ENCODE measurements at regions of chr22 and their contacts with region 1.

Region 1: DNA sequence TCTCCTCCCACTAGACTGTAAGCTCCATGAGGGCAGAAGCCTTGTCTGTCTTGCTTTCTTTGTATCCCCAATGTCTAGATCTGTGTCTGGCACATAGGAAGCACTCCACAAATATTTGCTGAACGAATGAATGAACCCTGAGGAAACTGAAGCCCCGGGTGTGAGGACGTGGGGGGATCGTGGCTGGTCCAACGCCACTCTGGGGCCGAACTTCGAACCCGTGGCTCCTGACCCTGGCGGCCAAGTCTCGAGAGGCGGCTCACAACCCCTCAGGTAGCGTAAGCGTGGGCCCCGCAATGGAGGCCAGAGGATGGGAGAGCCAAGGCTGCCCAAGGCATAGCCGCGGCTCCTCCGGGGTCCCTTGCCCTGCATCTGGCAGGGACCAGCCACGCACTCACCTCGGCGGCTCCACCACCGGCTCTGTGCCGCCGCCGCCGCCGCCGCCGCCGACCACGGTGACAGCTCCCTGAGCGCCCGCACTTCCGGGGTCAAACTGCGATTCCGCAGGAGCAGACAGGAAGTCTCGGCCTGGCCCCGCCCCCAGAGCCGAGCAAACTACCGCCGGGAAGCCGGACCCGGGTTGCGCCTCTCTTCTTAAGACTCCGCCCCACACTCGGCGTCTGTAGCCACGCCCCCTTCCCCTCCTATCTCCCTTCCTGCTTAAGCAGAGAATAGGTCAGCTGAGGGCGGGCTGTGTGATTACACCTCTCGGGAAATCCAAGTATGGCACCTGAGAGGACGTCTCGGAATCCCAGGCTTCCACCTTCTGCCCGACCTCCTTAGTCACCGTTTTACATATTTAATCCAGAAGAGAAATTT is at the start of gene ASCC2:
- DNase-seq: peak; percentile 91
- ATAC-seq: peak; percentile 99
- H3K4me3 ChIP-seq: peak within 1 kb of the TSS; percentile 99
- H3K27ac ChIP-seq: peak within 1 kb of the TSS; percentile 78
- H3K4me1 ChIP-seq: peaks cover 6% of the 10 kb centered on the region
- H3K27me3 ChIP-seq: no peaks in the 10 kb centered on the region
- CTCF ChIP-seq: no peak
- EP300 ChIP-seq: no peak
- POLR2A ChIP-seq: peak; percentile 90
- RAD21 ChIP-seq: no peak
- polyA plus RNA-seq, gene ASCC2: 5.3 to 6.4 TPM

Region 2: DNA sequence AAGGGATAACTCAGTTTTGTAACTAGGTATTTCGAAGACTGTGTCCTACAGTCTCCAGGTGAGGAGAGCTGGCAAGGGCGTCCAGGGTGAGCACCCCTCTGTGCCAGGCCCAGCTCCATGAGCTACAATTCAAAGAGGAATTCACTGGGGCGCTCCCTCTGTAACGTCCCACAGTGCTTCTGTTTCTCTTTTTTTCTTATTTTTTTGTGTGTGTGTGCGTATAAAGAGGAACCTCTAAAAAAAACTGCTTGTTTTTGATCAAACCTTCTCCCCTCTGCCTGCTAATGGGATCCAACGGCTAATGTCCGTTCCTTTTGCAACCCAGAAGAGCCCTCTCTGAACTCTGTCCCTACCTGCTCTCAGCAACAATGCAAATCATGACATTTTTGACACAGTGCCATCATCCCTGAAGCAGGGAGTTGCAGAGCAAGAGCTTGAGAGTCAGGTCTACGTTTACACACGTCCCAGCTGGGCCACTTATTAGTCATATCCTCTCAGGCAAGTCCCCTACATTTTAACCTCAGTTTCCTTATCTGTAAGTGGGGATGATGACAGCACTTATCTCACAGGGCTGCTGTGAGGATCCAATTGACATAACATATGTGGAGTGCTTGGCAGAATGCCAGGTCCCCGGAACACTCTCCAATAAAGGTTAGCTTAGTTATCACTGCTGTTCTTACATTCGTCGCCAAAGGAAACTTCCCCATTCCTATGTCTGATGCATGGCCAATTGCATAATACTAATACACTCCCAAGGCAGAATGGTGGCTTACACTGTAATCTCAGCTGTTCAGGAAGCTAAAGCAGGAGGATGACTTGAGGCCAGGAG is 16.8 kb before region 1 on chr22:
- CTCF ChIA-PET with region 1: no interaction called
- POLR2A ChIA-PET with region 1: interaction called, 6 read pairs
- RAD21 ChIA-PET with region 1: interaction called, 9 read pairs
- SMC1A ChIA-PET with region 1: interaction called, 11 read pairs
- in situ Hi-C with region 1: no loop called
- intact Hi-C with region 1: no loop called
- DNase-seq: peak; percentile 82
- ATAC-seq: peak; percentile 98
- H3K4me3 ChIP-seq: no peak overlapping the region
- H3K27ac ChIP-seq: peak overlapping the region; percentile 70
- H3K4me1 ChIP-seq: peaks cover 7% of the 10 kb centered on the region; the same call in 1 of the 2 replicates
- H3K27me3 ChIP-seq: no peaks in the 10 kb centered on the region
- CTCF ChIP-seq: 0 out of 6 replicates have a peak, but pooled peaks of 1 of the 3 experiments have one; percentile 9
- EP300 ChIP-seq: no peak; a peak in 1 of 4 replicates
- POLR2A ChIP-seq: no peak
- RAD21 ChIP-seq: 0 out of 2 replicates have a peak, but pooled peaks have one; percentile 7